Motor neuron (in vitro differentiated cells): ENCODE measurements at regions of chr16 and their contacts with region 1.

Region 1: DNA sequence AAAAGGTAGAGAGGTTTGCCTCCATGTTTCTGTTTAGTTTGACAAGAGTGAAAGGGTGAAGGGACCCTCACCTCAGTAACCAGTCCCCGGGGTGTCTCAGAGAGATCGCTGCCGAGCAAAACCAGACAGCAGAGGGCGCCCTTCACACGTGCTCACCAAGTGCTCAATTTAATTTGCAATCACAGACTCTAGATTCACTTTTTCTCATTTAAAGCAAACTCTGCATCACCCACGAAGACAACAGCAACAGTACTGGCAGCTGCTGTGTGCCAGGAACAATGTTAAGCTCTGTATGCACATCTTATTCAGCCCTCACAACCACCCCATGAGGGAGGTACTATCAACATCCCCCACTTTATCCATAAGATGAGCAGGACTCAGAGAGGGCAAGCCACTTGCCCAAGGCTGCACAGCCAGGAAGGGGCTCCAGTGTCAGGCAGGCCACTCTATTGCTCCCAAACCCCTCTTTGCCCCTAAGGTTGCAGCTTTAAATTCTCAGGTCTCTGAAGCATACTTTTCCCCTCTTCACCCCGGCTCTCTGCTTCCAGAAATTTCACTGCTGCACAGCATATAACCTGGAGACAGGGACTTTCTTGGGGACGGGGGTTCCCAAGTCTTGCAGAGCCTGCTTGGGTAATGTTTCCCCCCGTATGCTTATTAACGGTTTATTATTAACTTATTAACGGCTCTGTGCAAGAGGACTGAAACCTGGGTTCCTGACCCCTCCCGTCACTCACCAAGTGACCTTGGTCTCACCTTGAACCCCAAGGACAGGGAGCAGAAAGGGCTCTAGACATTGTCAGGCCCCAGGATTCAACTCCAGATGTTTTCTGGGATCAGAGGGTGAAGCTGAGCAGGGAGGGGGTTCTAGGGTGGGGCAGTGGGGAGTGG is 70.9 kb downstream of the CNGB1 start:
- ATAC-seq: peak; percentile 61 to 91 (median 78)
- H3K4me3 ChIP-seq: no peak overlapping the region
- H3K27ac ChIP-seq: no peak overlapping the region
- H3K4me1 ChIP-seq: no peaks in the 10 kb centered on the region

Region 2: GRCh38 chr16:57667526-57668258 is 232.3 kb before region 1 on chr16:
- in situ Hi-C with region 1: no loop called
- ATAC-seq: peak in 6 of 8 experiments; percentile 19 to 97 (median 92)
- H3K4me3 ChIP-seq: no peak overlapping the region
- H3K27ac ChIP-seq: peak overlapping the region; percentile 73 to 80
- H3K4me1 ChIP-seq: peaks cover 15 to 16% of the 10 kb centered on the region in 2 donors

Region 3: GRCh38 chr16:58110571-58111301 is 210.7 kb after region 1 on chr16:
- in situ Hi-C with region 1: loop called in 2 of 9 experiments (anchors 25 kb)
- ATAC-seq: peak in 6 of 8 experiments; percentile 16 to 83 (median 78)
- H3K4me3 ChIP-seq: no peak overlapping the region
- H3K27ac ChIP-seq: no peak overlapping the region
- H3K4me1 ChIP-seq: peaks cover 14 to 16% of the 10 kb centered on the region in 2 donors